ENCODE measurements at regions of chr1 and their contacts with region 1.

Region 1: GRCh38 chr1:11654137-11654938 is at the starts of genes FBXO2 and FBXO44:
- DNase-seq: peak; percentile 67
- H3K4me3 ChIP-seq: peak within 1 kb of the TSS; percentile 72
- H3K27ac ChIP-seq: no peak within 1 kb of the TSS
- H3K4me1 ChIP-seq: peaks cover 25% of the 10 kb centered on the region
- CTCF ChIP-seq: no peak
- total RNA-seq, gene FBXO2: 1.8 and 2.7 TPM in 2 replicates
- total RNA-seq, gene FBXO44: 11.4 and 16.2 TPM in 2 replicates

Region 2: GRCh38 chr1:11681071-11681771 is 26.9 kb after region 1 on chr1 and contains the start of gene MAD2L2:
- CTCF ChIA-PET with region 1: no interaction called
- POLR2A ChIA-PET with region 1: interaction called, 16 read pairs
- intact Hi-C with region 1: no loop called
- DNase-seq: peak; percentile 92
- H3K4me3 ChIP-seq: peak within 1 kb of the TSS; percentile 86
- H3K27ac ChIP-seq: peak within 1 kb of the TSS; percentile 95
- H3K4me1 ChIP-seq: peaks cover 27% of the 10 kb centered on the region
- CTCF ChIP-seq: no peak
- total RNA-seq, gene MAD2L2: 121 and 144 TPM in 2 replicates